ENCODE measurements at regions of chr17 and their contacts with region 1.

Region 1: DNA sequence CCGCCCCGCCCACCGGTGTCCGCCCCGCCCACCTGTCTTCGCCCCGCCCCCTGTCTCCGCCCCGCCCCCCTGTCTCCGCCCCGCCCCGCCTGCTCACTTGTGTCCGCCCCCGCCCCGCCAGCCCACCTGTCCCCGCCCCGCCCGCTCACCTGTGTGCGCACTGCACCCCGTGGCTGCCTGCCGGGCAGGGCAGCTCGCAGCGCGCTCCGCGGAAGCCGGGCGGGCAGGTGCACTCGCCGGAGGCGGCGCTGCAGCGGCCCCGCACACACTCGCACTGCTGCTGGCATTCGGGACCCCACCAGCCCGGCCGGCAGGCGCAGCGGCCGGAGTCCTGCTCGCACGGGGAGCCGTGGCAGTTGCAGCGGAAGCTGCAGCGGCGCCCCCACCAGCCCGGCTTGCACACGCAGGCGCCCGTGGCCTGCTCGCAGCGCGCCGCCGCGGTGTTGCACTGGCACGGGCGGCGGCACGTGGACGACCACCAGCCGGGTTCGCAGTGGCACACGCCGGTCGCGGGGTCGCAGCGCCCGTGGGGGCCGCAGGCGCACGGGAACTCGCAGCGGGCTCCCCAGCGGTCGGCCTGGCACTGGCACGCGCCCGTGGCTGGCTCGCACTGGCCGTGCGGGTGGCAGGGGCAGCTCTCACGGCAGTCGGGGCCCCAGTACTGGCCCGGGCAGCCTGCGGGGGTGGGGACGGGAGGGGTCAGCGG is 2.1 kb downstream of the SCARF1 start:
- DNase-seq: peak; percentile 72 to 89
- H3K4me3 ChIP-seq: peak overlapping the region; percentile 86
- H3K27ac ChIP-seq: no peak overlapping the region
- H3K4me1 ChIP-seq: peaks cover 24% of the 10 kb centered on the region
- H3K27me3 ChIP-seq: no peaks in the 10 kb centered on the region
- CTCF ChIP-seq: no peak; the same call in 1 of the 2 replicates

Region 2: GRCh38 chr17:1533661-1534325 is 109.7 kb before region 1 on chr17:
- CTCF ChIA-PET with region 1: no interaction called
- POLR2A ChIA-PET with region 1: no interaction called
- intact Hi-C with region 1: no loop called
- DNase-seq: no peak
- H3K4me3 ChIP-seq: no peak overlapping the region
- H3K27ac ChIP-seq: no peak overlapping the region
- H3K4me1 ChIP-seq: no peaks in the 10 kb centered on the region
- H3K27me3 ChIP-seq: no peaks in the 10 kb centered on the region
- CTCF ChIP-seq: no peak

Region 3: DNA sequence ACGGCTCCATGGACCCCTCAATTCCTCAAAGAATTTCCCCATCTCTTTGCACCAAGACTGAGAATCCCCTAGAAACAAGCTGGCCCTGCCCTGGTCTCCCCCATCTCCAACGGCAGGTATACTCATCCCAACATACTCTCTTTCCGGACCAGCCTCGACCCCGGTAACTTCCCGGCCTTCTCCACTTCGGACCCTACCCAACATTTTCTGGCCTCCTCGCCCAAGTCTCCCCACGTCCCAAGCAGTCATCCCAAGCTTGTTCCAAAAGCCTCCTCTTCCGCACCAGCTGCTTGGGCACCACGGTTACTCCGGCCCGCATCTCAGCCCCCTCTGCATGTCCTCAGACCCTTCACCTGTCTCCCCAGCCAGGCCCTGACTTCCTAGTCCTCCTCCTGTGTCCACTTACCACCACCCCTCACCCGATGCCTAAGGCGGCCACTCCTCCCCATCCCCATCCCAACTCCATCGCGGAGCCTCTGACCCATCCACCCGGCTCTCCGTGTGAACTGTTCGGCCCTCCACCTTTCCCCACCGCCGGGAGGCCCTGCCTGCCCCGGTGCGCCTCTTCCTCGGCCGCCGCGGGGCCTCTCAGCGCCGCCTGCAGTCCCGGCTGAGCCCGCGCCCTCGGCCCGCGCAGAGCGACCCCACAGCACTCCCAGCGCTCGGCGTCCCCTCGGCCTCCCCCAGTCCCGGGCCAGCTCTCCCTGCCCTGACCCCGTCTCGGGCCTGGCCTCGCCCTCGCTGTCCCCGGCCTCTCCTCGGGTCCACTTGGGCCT is 81.9 kb before region 1 on chr17:
- CTCF ChIA-PET with region 1: interaction called, 3 read pairs
- POLR2A ChIA-PET with region 1: interaction called, 5 read pairs
- intact Hi-C with region 1: loop called (anchors 2 kb)
- DNase-seq: peak in 1 of 2 experiments; percentile 36
- H3K4me3 ChIP-seq: peak overlapping the region; percentile 92
- H3K27ac ChIP-seq: no peak overlapping the region
- H3K4me1 ChIP-seq: peaks cover 21% of the 10 kb centered on the region
- H3K27me3 ChIP-seq: no peaks in the 10 kb centered on the region
- CTCF ChIP-seq: no peak; the same call in 1 of the 2 replicates

Measured in PC-9 (cell line).